Transverse colon (tissue), 4 donors: ENCODE measurements at regions of chr17 and their contacts with region 1.

Region 1: DNA sequence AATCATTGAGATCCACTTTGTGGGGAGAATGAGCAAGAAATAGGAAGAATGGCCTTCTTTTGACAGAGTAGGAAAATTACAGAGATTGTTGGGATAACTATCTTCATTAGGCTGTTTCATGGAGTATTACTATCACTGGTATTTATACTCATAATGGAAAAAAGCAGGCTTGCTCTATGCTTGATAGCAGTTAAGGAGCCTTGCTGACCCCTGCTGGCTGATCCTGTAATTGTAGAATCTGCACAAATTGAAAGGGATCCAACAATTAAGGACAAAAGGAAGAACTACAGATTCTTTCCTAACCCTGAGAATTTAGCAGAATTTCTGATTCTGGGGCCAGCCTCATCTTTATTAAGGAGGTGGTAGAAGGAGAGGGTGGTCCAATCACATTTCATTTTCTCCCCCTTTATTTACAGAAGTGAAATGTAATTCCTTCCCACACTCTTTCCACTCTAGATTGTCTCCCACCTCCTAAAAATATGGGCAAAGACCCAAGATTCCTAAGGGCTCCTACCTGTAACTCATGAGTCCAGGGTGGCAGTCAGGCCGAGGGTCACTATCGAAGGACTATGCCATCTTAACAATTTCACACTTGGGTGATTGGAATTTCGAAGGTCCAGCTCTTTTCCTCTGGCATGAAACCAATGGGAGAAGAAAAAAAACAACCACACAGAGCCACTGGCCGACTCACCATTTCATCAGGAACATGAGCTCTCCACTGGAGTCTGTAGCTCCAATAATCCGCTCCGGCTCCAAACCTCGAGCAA is 26.3 kb downstream of the NFE2L1 start:
- DNase-seq: peak; percentile 84
- H3K4me3 ChIP-seq: no peak overlapping the region
- H3K27ac ChIP-seq: no peak overlapping the region
- H3K4me1 ChIP-seq: no peaks in the 10 kb centered on the region
- H3K27me3 ChIP-seq: no peaks in the 10 kb centered on the region
- CTCF ChIP-seq: peak; percentile 72 to 91 (median 79)
- EP300 ChIP-seq: no peak
- POLR2A ChIP-seq: no peak

Region 2: GRCh38 chr17:47987240-47987835 is 87.2 kb before region 1 on chr17:
- in situ Hi-C with region 1: no loop called
- intact Hi-C with region 1: no loop called
- DNase-seq: no peak
- H3K4me3 ChIP-seq: no peak overlapping the region
- H3K27ac ChIP-seq: peak overlapping the region in 3 of 4 donors; percentile 21 to 65 (median 58)
- H3K4me1 ChIP-seq: peaks cover 0 to 11% (median 5%) of the 10 kb centered on the region in 4 donors
- H3K27me3 ChIP-seq: no peaks in the 10 kb centered on the region
- CTCF ChIP-seq: no peak
- EP300 ChIP-seq: no peak
- POLR2A ChIP-seq: no peak

Region 3: DNA sequence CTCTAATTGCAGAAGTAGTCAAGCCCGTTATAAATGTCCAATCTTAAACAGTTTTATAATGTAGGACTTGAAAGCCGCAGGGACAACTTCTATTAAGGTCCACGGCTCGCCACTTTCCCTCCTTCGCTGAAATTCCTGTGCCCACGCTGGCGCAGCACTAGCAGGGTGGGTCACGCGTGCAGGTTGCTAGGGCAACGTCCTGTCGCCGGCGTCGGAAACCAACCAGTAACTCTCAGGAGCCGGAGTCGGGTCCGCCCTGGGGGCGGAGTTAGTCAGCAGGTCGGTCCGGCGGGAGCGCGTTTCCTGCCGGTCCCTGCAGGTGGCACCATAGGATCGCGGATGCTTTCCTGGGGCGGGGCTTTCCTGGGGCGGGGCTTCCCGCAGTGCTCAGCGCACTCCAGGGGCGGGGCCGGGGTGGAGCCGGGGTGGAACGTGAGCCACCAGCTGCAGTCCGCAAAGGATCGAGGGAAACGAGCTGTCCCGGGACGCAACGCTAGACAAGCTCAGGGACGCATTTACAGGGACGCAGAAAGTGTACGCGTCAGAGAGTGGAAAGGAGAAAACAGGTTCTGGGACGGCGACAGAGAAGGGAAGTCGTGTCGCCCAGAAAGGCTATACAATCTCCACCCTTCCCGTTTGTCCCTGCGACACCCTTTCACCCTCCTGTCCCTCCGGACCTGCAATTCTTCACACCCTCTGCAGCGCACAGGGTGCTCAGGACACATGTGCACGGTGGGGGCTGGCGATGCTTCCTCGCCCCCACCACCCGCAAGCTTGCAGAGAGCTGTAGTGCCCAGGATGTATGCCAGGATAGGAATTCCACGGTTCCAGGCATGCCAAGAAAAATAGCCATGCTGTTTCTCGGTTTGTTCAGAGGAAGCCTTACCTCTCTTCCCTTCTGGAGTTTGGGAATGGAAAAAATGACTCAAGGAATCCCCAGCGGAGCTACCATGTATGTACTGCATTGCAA is 49.3 kb before region 1 on chr17:
- in situ Hi-C with region 1: loop called in 3 of 4 experiments (anchors 5 to 10 kb)
- intact Hi-C with region 1: loop called (anchors 2 kb)
- DNase-seq: peak; percentile 98
- H3K4me3 ChIP-seq: peak overlapping the region; percentile 17 to 51 (median 28)
- H3K27ac ChIP-seq: peak overlapping the region; percentile 66 to 84 (median 78)
- H3K4me1 ChIP-seq: peaks cover 35 to 38% (median 36%) of the 10 kb centered on the region in 4 donors
- H3K27me3 ChIP-seq: peaks cover 27% of the 10 kb centered on the region
- CTCF ChIP-seq: peak; percentile 69 to 89 (median 82)
- EP300 ChIP-seq: no peak
- POLR2A ChIP-seq: peak; percentile 27

Region 4: DNA sequence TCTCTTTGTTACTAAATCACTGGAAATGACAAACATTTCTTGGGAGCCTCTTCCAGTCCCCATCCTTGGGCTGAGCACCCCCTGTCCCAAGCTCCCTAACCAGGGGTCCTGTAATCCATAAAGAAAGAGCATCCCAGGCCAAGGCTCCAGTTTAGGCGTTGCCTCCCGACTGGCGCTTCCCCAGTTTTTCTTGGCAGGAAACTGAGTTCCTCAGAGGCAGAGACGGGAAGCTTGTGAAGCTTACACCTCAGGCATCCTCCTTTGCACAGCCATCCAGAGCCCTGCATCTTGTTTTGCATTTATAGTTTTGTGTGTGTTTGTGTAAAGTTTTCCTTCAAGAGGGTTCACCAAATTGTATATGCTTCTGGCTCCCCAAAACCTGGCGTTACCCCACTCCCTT is 44.0 kb before region 1 on chr17:
- in situ Hi-C with region 1: loop called in 3 of 4 experiments (anchors 5 to 10 kb)
- intact Hi-C with region 1: loop called (anchors 2 kb)
- DNase-seq: no peak
- H3K4me3 ChIP-seq: no peak overlapping the region
- H3K27ac ChIP-seq: no peak overlapping the region
- H3K4me1 ChIP-seq: peaks cover 12 to 15% (median 15%) of the 10 kb centered on the region in 4 donors
- H3K27me3 ChIP-seq: peaks cover 3% of the 10 kb centered on the region
- CTCF ChIP-seq: no peak
- EP300 ChIP-seq: no peak
- POLR2A ChIP-seq: no peak